A549 (cell line): ENCODE measurements at regions of chr10 and their contacts with region 1.

Region 1: DNA sequence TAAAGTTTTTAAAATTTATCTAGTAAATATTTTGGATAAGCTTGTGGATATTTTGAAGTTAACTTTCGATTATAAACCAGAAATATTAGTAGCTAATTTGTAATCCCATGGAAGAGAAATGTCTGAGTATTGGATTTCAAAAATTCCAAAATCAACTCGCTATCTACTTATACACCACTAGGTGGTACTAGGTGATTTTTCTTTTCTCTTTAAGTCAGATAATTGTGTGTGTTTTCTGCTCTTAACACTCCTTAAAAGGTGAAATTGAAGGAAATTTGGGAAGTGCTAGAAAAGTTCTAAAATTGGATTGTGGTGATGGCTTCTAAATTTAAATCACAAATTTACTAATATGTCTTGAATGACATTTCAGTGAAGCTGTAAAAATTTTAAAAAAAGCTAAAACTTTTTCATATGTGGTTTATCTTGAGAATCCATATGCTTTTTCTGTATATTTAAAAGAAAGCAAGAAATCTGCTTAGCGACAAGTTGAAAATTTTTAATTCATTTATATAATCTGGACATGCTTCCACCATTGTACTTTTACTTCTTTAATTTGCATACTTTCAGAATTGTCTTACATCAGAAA is 90.2 kb downstream of the IPMK start:
- DNase-seq: peak; percentile 16 to 39
- ATAC-seq: peak in 1 of 2 experiments; percentile 52; a peak in 1 of 6 replicates
- H3K4me3 ChIP-seq: no peak overlapping the region
- H3K27ac ChIP-seq: no peak overlapping the region
- H3K4me1 ChIP-seq: peaks cover 27% of the 10 kb centered on the region; the same call in 2 of the 3 replicates
- CTCF ChIP-seq: peak; percentile 84
- EP300 ChIP-seq: no peak
- POLR2A ChIP-seq: no peak
- RAD21 ChIP-seq: peak; percentile 87 to 89

Region 2: GRCh38 chr10:58054881-58055280 is 122.6 kb before region 1 on chr10:
- CTCF ChIA-PET with region 1: no interaction called
- POLR2A ChIA-PET with region 1: no interaction called
- DNase-seq: no peak
- ATAC-seq: no peak
- H3K4me3 ChIP-seq: no peak overlapping the region
- H3K27ac ChIP-seq: no peak overlapping the region
- H3K4me1 ChIP-seq: no peaks in the 10 kb centered on the region
- CTCF ChIP-seq: no peak
- EP300 ChIP-seq: no peak
- POLR2A ChIP-seq: no peak
- RAD21 ChIP-seq: no peak

Region 3: DNA sequence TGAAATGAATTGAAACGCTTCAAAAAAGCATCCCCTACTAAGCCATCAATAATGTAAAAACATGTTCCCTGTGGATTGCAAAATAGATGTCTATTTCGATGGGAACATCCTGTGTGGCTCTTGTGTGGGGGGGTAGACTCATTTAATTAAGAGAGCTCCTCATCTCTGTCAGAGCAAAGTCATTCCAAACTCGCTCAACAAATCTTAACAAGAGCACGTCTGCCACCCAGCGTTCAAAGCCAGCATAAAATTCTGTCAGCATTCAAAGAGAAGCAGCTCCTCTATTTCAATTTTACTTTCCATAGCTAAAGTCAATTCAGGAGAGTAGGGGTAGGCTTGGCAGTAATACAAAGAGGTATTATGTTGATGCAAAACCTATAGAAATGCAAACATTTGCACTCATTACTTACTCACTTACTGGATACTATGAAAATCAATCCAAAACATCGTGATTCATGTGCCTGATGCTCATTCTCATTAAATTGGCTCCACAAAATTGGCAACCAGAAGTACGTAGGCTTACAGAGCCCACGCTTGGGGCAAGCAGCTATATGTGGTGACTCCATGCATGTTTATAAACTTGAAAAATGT is 24.7 kb before region 1 on chr10:
- CTCF ChIA-PET with region 1: interaction called, 11 read pairs
- POLR2A ChIA-PET with region 1: no interaction called
- DNase-seq: peak in 1 of 2 experiments; percentile 62
- ATAC-seq: peak; percentile 59 to 70; a peak in 5 of 6 replicates
- H3K4me3 ChIP-seq: no peak overlapping the region
- H3K27ac ChIP-seq: no peak overlapping the region
- H3K4me1 ChIP-seq: no peaks in the 10 kb centered on the region
- CTCF ChIP-seq: peak; percentile 72
- EP300 ChIP-seq: no peak
- POLR2A ChIP-seq: no peak
- RAD21 ChIP-seq: peak; percentile 83 to 85

Region 4: GRCh38 chr10:58189269-58189668 is 11.8 kb after region 1 on chr10:
- CTCF ChIA-PET with region 1: interaction called, 15 read pairs
- POLR2A ChIA-PET with region 1: no interaction called
- DNase-seq: peak in 1 of 2 experiments; percentile 16
- ATAC-seq: no peak; a peak in 1 of 6 replicates
- H3K4me3 ChIP-seq: no peak overlapping the region
- H3K27ac ChIP-seq: no peak overlapping the region
- H3K4me1 ChIP-seq: no peaks in the 10 kb centered on the region
- CTCF ChIP-seq: no peak
- EP300 ChIP-seq: no peak
- POLR2A ChIP-seq: no peak
- RAD21 ChIP-seq: no peak

Region 5: DNA sequence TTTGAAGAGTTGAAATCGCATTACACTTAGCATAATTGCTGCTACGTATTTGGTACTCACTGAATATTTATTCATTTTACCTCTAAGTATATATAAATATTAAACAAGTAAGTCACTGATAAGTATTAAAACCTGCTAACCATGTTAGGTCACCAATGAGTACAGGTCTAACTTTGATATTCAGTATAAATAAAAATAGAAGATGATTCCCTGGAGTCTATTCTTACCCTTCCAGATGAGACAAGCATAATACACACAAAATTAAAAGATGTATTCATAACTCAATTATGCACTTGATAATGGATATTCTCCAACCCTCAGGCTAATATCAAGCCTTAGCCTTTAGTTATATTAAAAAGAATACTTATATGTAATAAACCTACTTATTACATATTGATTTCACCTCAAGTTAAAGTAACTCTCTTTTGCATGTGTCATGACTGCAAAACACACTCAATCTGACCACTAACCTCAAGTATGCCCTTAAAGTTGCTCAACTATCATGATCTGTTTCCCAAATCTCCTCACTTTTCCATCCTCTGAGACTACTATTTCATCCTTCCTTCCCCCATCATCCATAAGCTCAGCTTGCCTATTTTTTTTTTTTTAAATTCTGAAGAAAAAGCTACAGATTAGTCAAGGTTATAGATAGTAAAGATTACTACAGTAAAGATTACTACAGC is 43.5 kb after region 1 on chr10:
- CTCF ChIA-PET with region 1: no interaction called
- POLR2A ChIA-PET with region 1: no interaction called
- DNase-seq: no peak
- ATAC-seq: no peak
- H3K4me3 ChIP-seq: no peak overlapping the region
- H3K27ac ChIP-seq: no peak overlapping the region
- H3K4me1 ChIP-seq: peaks cover 27% of the 10 kb centered on the region
- CTCF ChIP-seq: no peak
- EP300 ChIP-seq: no peak
- POLR2A ChIP-seq: no peak
- RAD21 ChIP-seq: no peak

Region 6: DNA sequence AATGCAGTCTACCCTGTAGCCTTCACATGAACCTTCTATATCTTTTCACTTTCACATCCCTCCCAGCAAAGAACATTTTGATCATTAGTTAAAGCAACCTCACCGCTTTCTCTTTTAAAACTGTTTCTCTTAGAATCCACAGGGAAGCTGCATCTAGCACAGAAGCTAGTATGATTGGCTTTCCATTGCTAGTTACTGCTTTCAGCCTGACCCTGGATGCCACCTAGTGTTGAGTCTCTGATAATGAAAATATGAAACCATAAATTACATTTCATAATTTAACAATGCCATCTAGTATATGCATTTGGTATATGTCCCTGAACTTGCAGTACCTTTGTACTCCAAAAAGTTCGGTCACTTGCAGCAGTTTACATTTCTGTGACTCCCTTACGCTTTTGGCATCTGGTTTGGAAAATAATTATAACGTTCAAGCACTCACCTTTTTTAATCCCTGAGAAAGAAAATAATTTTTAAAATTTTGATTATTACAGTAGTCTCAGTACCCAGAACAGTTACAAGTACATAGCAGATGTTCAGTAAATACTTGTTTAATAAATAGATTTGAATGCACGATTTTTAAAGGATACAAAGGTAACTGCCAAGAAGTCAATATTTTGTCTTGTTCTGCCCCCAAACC is 114.2 kb after region 1 on chr10:
- CTCF ChIA-PET with region 1: interaction called, 221 read pairs
- POLR2A ChIA-PET with region 1: no interaction called
- DNase-seq: peak; percentile 15 to 66
- ATAC-seq: peak; percentile 83 to 92
- H3K4me3 ChIP-seq: no peak overlapping the region
- H3K27ac ChIP-seq: no peak overlapping the region
- H3K4me1 ChIP-seq: no peaks in the 10 kb centered on the region
- CTCF ChIP-seq: peak; percentile 97
- EP300 ChIP-seq: no peak
- POLR2A ChIP-seq: no peak
- RAD21 ChIP-seq: peak; percentile 93 to 95

Region 7: DNA sequence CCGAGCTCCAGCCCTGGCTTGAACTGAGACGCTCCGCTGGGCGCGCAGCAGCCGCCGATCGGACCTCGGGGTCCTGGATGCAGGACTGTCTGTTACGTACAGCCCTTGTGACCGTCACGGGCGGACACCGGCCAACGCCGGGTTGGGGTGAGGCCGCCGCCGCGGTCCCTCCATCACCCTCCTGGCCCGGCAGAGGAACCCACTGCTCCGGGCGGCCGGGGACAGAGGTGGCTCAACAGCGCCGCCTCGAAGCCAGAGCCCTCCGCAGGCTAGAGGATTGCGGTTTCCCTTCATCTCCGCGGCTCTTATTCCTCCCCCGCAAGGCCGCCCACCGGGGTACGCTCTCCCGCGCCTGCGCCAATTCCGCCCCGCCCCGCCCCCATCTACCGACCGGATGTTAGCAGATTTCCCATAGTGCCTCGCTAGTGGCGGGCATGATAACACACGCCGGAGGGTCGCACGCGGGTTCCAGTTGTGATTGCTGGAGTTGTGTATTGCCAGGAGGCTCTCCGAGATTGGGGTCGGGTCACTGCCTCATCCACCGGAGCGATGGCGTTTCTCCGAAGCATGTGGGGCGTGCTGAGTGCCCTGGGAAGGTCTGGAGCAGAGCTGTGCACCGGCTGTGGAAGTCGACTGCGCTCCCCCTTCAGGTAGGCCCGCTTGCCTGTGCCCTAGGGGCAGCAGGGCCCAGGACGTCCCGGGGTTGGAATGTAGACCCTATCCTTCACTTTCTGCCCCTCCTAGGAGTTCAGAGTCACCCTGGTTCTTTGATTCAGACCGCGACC is 207.7 kb after region 1 on chr10 and contains the start of gene TFAM:
- CTCF ChIA-PET with region 1: interaction called, 10 read pairs
- POLR2A ChIA-PET with region 1: no interaction called
- DNase-seq: peak; percentile 92 to 96
- ATAC-seq: peak; percentile 95 to 96
- H3K4me3 ChIP-seq: peak within 1 kb of the TSS; percentile 85
- H3K27ac ChIP-seq: peak within 1 kb of the TSS; percentile 86 to 98
- H3K4me1 ChIP-seq: peaks cover 16% of the 10 kb centered on the region; the same call in 2 of the 3 replicates
- CTCF ChIP-seq: peak; percentile 69
- EP300 ChIP-seq: no peak
- POLR2A ChIP-seq: peak; percentile 91
- RAD21 ChIP-seq: peak; percentile 62 to 78
- polyA plus RNA-seq, gene TFAM: 37.1 and 61.2 TPM in 2 replicates